Activated naive CD8-positive, alpha-beta T cell treated with anti-CD3 and anti-CD28 coated beads, Interleukin-2, amount 10 ng/mL, durations not matched to agents 7 days and 5 days (primary cell): ENCODE measurements at regions of chr2 and their contacts with region 1.

Region 1: DNA sequence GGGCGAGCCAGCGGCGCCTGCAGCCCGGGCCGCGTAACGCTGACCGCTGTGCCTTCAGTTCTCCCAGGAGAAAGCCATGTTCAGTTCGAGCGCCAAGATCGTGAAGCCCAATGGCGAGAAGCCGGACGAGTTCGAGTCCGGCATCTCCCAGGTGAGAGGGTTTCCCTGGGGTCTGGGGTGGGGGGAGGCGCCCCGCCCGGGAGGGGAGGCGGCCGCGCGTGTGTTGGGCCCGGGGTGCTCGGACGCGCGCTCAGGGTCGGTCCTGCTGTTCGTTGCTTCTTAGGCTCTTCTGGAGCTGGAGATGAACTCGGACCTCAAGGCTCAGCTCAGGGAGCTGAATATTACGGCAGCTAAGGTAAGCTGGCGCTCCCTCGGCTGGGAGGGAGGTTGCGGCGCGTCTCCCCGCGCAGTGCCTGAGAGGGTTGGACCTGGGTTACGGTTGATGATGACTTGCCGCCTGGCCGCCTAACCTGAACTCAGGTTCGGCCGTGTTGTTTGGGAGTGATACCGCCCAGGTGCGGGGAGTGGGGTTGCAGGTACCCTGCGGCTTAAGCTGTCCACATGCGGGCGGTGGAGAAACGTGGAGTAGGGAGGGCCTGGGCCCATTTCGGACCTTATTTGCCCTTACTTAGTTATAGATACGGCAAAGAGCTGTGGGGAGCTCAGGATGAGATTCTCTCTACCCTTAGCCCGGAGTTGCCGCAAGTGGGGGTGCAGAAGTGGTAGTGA is 638 bp downstream of the RPS7 start:
- DNase-seq: no peak
- ATAC-seq: peak; percentile 32
- H3K4me3 Mint-ChIP-seq: peak overlapping the region; percentile 93
- H3K27ac Mint-ChIP-seq: peak overlapping the region; percentile 91
- H3K4me1 Mint-ChIP-seq: peaks cover 43% of the 10 kb centered on the region
- H3K27me3 Mint-ChIP-seq: no peaks in the 10 kb centered on the region

Region 2: GRCh38 chr2:3518496-3519254 is 57.0 kb before region 1 on chr2:
- POLR2A ChIA-PET with region 1: interaction called, 19 read pairs
- DNase-seq: peak; percentile 99
- ATAC-seq: peak; percentile 91
- H3K4me3 Mint-ChIP-seq: peak overlapping the region; percentile 92
- H3K27ac Mint-ChIP-seq: peak overlapping the region; percentile 90
- H3K4me1 Mint-ChIP-seq: peaks cover 22% of the 10 kb centered on the region
- H3K27me3 Mint-ChIP-seq: no peaks in the 10 kb centered on the region

Region 3: GRCh38 chr2:3651691-3652648 is 76.3 kb after region 1 on chr2:
- POLR2A ChIA-PET with region 1: interaction called, 10 read pairs
- DNase-seq: peak; percentile 78
- ATAC-seq: peak; percentile 83
- H3K4me3 Mint-ChIP-seq: peak overlapping the region; percentile 81
- H3K27ac Mint-ChIP-seq: peak overlapping the region; percentile 92
- H3K4me1 Mint-ChIP-seq: peaks cover 10% of the 10 kb centered on the region
- H3K27me3 Mint-ChIP-seq: no peaks in the 10 kb centered on the region